ENCODE measurements at regions of chr11 and their contacts with region 1.

Region 1: DNA sequence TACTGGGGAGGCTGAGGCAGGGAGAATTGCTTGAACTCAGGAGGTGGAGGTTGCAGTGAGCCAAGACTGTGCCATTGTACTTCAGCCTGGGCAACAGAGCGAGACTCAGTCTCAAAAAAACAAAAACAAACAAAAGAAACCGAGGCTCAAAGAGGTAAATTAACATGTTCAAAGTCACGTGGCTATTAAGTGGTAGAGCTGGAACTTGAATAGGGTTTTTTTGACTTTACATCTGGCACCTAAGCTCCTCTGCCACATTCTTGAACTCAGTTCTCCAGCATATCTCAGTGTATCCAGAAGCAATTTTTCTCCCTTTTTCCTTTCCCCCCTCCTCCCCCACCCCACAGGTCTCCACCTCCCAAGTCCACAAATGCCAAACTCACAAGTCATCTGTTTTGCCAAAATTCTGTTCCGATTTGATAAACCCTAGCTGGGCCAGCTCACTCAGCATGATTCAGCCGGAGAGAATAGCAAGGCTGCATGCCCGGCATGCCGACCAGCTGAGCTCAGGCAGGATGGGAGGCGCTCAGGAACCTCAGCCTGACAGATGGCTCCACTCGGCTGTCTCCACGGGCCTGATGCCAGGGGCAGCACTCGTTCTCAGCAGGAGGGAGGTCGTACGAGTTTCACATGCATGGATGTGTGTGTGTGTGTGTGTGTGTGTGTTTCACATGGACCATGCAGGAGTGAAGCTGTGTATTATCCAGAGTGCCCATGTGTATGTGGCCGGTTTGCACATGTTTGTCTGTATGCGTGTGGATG is 63.2 kb upstream of the RRAS2 start:
- DNase-seq: peak; percentile 89
- H3K4me3 ChIP-seq: no peak overlapping the region
- H3K27ac ChIP-seq: peak overlapping the region; percentile 1
- H3K4me1 ChIP-seq: peaks cover 31% of the 10 kb centered on the region
- H3K27me3 ChIP-seq: no peaks in the 10 kb centered on the region
- CTCF ChIP-seq: no peak

Region 2: GRCh38 chr11:13772223-13773046 is 649.8 kb before region 1 on chr11:
- CTCF ChIA-PET with region 1: no interaction called
- dilution Hi-C with region 1: no loop called
- in situ Hi-C with region 1: no loop called
- intact Hi-C with region 1: no loop called
- DNase-seq: peak; percentile 58
- H3K4me3 ChIP-seq: no peak overlapping the region
- H3K27ac ChIP-seq: no peak overlapping the region
- H3K4me1 ChIP-seq: no peaks in the 10 kb centered on the region
- H3K27me3 ChIP-seq: no peaks in the 10 kb centered on the region
- CTCF ChIP-seq: peak; percentile 47 to 60

Region 3: DNA sequence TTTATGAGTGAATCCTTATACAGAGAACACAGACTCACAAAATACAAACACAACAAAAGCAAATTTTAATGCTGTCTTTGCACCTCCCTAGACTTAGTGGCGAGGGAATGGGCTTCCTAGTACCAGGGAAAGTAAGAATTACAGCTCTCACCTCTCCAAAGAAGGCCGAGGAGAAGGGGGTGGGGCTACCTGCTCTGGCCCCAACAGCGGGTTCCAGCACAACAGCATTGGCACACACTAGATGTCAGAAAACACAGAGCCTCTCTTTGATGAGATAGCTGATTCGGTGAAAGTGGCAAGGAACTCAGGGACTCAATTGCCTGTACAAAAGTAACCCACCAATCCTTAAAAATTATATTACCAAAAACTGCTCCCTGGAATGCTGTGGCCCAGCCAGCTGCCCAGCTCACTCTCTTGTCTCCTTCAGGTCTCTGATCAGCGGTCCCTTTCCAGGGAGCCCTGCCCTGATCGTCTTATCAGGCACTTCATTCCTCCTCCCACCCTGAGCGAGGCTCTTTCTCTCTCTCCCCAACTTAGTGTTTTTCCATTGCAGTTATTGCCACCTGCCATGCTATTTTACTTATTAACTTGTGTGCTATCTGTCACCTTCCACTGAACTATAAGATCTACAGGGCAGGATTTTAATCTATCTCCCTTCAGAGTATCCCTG is 429.0 kb before region 1 on chr11:
- CTCF ChIA-PET with region 1: no interaction called
- dilution Hi-C with region 1: no loop called
- in situ Hi-C with region 1: no loop called
- intact Hi-C with region 1: no loop called
- DNase-seq: no peak
- H3K4me3 ChIP-seq: no peak overlapping the region
- H3K27ac ChIP-seq: no peak overlapping the region
- H3K4me1 ChIP-seq: no peaks in the 10 kb centered on the region
- H3K27me3 ChIP-seq: peaks cover 3% of the 10 kb centered on the region
- CTCF ChIP-seq: no peak

Region 4: GRCh38 chr11:14300661-14301304 is 121.5 kb before region 1 on chr11:
- CTCF ChIA-PET with region 1: interaction called, 3 read pairs
- dilution Hi-C with region 1: no loop called
- in situ Hi-C with region 1: loop called (anchors 10 kb)
- intact Hi-C with region 1: loop called (anchors 1 kb)
- DNase-seq: peak; percentile 62
- H3K4me3 ChIP-seq: no peak overlapping the region
- H3K27ac ChIP-seq: no peak overlapping the region
- H3K4me1 ChIP-seq: peaks cover 14% of the 10 kb centered on the region
- H3K27me3 ChIP-seq: no peaks in the 10 kb centered on the region
- CTCF ChIP-seq: peak; percentile 85 to 93

Region 5: GRCh38 chr11:14306481-14306880 is 115.8 kb before region 1 on chr11:
- CTCF ChIA-PET with region 1: interaction called, 4 read pairs
- dilution Hi-C with region 1: no loop called
- in situ Hi-C with region 1: loop called (anchors 10 kb)
- intact Hi-C with region 1: loop called (anchors 1 kb)
- DNase-seq: no peak
- H3K4me3 ChIP-seq: no peak overlapping the region
- H3K27ac ChIP-seq: no peak overlapping the region
- H3K4me1 ChIP-seq: peaks cover 27% of the 10 kb centered on the region
- H3K27me3 ChIP-seq: no peaks in the 10 kb centered on the region
- CTCF ChIP-seq: peak; percentile 24 to 40

Region 6: DNA sequence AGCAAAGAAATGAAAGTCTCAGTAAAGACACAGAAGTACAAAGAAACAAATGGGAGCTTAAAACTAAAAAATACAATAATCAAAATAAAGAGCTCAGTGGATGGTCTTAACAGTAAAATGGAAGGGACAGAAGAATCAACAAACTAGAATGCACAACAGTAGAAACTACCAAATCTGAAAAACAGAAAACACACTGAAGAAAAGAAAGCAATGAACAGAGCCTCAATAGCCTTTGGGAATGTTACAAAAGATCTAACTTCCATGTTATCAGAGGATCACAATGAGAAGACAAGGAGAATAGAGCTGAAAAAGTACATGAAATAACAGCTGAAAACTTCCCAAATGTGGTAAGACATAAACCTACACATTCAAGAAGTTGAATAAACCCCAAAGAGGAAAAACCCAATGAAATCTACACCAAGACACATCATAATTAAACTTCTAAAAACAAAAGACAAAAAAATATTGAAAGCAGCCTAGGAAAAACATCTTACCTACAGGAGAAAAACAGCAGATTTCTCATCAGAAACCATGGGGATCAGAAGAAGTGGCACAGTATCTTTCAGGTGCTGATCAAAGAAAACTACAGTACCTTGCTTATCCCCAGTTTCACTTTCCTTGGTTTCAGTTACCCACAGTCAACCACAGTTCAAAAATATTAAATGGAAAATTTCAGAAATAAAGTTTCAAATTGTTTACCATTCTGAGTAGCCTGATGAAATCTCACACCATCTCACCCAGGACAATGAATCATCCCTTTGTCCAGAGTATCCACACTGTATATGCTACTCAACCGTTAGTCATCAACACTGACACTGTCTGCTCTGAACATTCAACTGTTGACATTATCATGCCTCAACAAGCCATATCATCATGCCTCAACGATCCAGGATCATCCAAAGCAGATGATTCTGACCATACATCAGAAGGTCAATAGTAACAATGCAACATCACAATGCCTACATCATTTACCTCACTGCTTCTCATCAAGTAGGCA is 85.4 kb before region 1 on chr11:
- CTCF ChIA-PET with region 1: interaction called, 34 read pairs
- dilution Hi-C with region 1: no loop called
- in situ Hi-C with region 1: no loop called
- intact Hi-C with region 1: no loop called
- DNase-seq: peak; percentile 100
- H3K4me3 ChIP-seq: peak overlapping the region; percentile 37 to 46 (median 45)
- H3K27ac ChIP-seq: peak overlapping the region; percentile 98
- H3K4me1 ChIP-seq: peaks cover 31% of the 10 kb centered on the region
- H3K27me3 ChIP-seq: no peaks in the 10 kb centered on the region
- CTCF ChIP-seq: no peak

Region 7: DNA sequence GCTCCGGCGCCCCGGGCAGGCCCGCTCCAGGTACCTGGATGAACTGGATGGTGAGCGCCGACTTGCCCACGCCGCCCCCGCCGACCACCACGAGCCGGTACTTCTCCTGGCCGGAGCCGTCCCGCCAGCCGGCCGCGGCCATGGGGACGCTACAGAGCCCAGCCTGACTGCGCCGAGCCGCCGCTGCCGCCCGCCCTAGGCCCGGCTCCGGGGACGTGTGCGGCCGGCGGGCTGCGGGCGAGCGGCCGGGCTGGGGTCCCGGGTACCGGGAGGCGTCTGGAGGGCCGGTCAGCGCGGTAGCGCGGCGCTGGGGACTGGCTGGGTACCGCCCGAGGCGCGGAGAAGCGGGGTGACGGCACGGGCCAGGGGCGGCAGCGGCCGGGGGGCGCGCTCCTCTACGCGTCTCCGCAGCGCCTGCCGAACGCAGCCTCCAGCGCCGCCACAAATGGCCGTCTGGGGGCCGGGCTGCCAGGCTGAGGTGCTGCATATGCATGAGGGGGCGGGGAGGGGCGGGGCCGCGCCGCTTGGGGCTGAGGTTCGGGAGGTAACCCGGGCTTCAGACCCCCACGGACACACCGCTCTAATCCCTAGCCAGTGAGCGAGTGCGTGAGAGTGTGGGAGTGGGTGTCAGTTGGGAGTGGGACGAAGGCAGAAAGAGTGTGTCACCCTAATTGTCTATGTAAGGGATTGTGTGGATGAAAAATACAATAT is 63.3 kb before region 1 on chr11 and contains the start of gene RRAS2:
- CTCF ChIA-PET with region 1: interaction called, 3 read pairs
- dilution Hi-C with region 1: no loop called
- in situ Hi-C with region 1: no loop called
- intact Hi-C with region 1: loop called (anchors 1 kb)
- DNase-seq: peak; percentile 69
- H3K4me3 ChIP-seq: peak within 1 kb of the TSS; percentile 84 to 92 (median 88)
- H3K27ac ChIP-seq: peak within 1 kb of the TSS; percentile 88
- H3K4me1 ChIP-seq: peaks cover 5% of the 10 kb centered on the region
- H3K27me3 ChIP-seq: no peaks in the 10 kb centered on the region
- CTCF ChIP-seq: no peak
- total RNA-seq, gene RRAS2: 125 to 141 TPM

Region 8: DNA sequence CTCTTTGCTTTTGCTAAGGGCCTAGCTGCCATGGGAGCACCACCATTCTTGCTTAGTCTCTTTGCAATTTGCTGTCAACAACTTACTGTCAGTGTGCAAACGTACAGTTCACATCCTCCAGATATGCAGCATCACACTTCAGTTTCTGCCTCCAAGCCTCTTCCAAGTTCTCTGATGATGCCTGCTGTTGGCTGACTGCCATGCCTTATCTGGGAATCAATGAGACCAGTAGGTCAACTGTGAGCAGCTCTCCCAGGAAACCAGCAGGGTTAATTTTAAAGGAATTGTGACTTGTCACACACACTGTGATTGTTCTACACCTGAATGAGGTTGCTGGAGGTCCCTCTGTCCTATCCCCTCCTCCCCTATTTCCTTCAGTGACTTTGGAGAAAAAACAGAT is 21.4 kb after region 1 on chr11:
- CTCF ChIA-PET with region 1: no interaction called
- dilution Hi-C with region 1: no loop called
- in situ Hi-C with region 1: no loop called
- intact Hi-C with region 1: loop called (anchors 1 kb)
- DNase-seq: peak; percentile 64
- H3K4me3 ChIP-seq: no peak overlapping the region
- H3K27ac ChIP-seq: no peak overlapping the region
- H3K4me1 ChIP-seq: peaks cover 36% of the 10 kb centered on the region
- H3K27me3 ChIP-seq: no peaks in the 10 kb centered on the region
- CTCF ChIP-seq: no peak

Region 9: GRCh38 chr11:14454861-14455632 is 32.8 kb after region 1 on chr11:
- CTCF ChIA-PET with region 1: interaction called, 43 read pairs
- dilution Hi-C with region 1: no loop called
- in situ Hi-C with region 1: no loop called
- intact Hi-C with region 1: loop called (anchors 2 kb)
- DNase-seq: no peak
- H3K4me3 ChIP-seq: no peak overlapping the region
- H3K27ac ChIP-seq: no peak overlapping the region
- H3K4me1 ChIP-seq: no peaks in the 10 kb centered on the region
- H3K27me3 ChIP-seq: no peaks in the 10 kb centered on the region
- CTCF ChIP-seq: peak; percentile 68 to 70

Region 10: GRCh38 chr11:14611939-14612338 is 189.7 kb after region 1 on chr11:
- CTCF ChIA-PET with region 1: no interaction called
- dilution Hi-C with region 1: no loop called
- in situ Hi-C with region 1: no loop called
- intact Hi-C with region 1: no loop called
- DNase-seq: no peak
- H3K4me3 ChIP-seq: no peak overlapping the region
- H3K27ac ChIP-seq: no peak overlapping the region
- H3K4me1 ChIP-seq: no peaks in the 10 kb centered on the region
- H3K27me3 ChIP-seq: no peaks in the 10 kb centered on the region
- CTCF ChIP-seq: no peak